ENCODE measurements at regions of chr1 and their contacts with region 1.

Region 1: GRCh38 chr1:97920832-97921571 is at the start of gene DPYD:
- DNase-seq: peak; percentile 81
- H3K4me3 ChIP-seq: peak within 1 kb of the TSS; percentile 73 to 100 (median 99)
- H3K27ac ChIP-seq: peak within 1 kb of the TSS; percentile 72
- H3K4me1 ChIP-seq: peaks cover 17% of the 10 kb centered on the region
- H3K27me3 ChIP-seq: no peaks in the 10 kb centered on the region
- CTCF ChIP-seq: no peak
- total RNA-seq, gene DPYD: 16.8 to 24.3 TPM

Region 2: GRCh38 chr1:97668945-97669344 is 252.1 kb before region 1 on chr1:
- CTCF ChIA-PET with region 1: no interaction called
- dilution Hi-C with region 1: no loop called
- in situ Hi-C with region 1: no loop called
- intact Hi-C with region 1: loop called (anchors 1 kb)
- DNase-seq: peak; percentile 28
- H3K4me3 ChIP-seq: no peak overlapping the region
- H3K27ac ChIP-seq: no peak overlapping the region
- H3K4me1 ChIP-seq: no peaks in the 10 kb centered on the region
- H3K27me3 ChIP-seq: no peaks in the 10 kb centered on the region
- CTCF ChIP-seq: peak in 1 of 2 donors; percentile 45

Region 3: DNA sequence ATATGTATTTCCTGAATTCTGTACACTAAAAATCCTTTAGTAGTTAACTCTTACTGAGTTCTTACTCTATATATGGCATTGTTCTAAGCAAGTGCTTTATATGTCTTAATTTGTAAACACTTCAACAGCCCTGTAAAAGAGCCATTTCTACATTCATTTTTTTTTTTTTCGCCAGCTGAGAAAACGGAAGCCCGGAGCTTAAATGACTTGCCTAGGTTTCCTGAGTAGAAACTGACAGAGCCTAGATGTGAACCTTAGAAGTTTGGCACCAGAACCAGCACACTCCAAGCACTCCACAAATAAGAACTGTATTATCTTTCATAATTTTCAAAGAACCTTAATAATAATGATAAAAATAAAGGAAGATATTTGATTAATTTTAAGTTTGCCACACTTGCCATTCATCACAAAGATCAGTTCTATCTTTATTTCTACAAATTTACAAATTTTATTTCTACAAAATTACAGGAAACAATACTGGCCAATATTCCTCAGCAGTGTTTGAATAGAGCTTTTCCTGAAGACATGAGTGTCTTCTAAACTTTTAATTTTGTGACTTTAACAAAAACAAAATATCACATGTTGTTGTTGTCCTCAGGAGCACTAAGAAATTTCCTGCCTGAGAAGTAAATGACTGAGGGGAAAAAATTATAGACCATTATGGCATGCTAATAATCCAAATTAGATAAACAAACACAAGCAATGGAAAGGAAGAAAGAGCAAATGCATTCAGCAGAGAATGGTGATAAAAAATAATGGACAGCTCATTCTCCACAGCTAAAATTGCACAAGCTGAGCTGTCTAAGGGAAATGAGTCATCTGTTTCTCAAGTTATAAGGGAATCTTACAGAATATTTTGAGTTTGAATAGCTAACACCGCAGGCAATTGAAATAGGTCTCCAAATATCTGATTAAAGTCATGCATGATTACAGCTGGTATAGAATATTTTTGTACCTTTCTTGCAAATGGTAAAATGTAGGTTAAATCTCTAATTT is 71.4 kb before region 1 on chr1:
- CTCF ChIA-PET with region 1: interaction called, 12 read pairs
- dilution Hi-C with region 1: no loop called
- in situ Hi-C with region 1: no loop called
- intact Hi-C with region 1: loop called (anchors 5 kb)
- DNase-seq: peak; percentile 75
- H3K4me3 ChIP-seq: no peak overlapping the region
- H3K27ac ChIP-seq: no peak overlapping the region
- H3K4me1 ChIP-seq: peaks cover 13% of the 10 kb centered on the region
- H3K27me3 ChIP-seq: no peaks in the 10 kb centered on the region
- CTCF ChIP-seq: no peak

Region 4: DNA sequence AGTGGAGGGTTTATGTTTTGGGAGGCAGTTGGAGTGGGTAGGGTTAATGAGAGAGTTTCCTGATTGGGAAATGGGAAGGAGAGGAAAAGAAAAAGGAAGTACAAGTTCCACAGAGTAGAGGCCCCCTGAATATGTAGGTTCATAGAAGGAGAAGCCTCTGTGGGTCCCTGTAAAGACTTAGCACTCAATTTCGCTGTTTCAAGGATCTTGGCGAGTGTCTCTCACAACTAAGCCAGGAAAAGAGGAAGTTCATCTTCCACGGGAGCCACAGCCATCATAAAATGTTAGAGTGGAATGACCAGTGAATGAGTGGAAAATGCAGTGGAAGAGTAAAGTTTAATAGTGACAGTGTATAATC is 17.3 kb after region 1 on chr1:
- CTCF ChIA-PET with region 1: no interaction called
- dilution Hi-C with region 1: no loop called
- in situ Hi-C with region 1: no loop called
- intact Hi-C with region 1: loop called (anchors 1 kb)
- DNase-seq: no peak
- H3K4me3 ChIP-seq: no peak overlapping the region
- H3K27ac ChIP-seq: peak overlapping the region; percentile 43
- H3K4me1 ChIP-seq: peaks cover 41% of the 10 kb centered on the region
- H3K27me3 ChIP-seq: no peaks in the 10 kb centered on the region
- CTCF ChIP-seq: no peak

Region 5: DNA sequence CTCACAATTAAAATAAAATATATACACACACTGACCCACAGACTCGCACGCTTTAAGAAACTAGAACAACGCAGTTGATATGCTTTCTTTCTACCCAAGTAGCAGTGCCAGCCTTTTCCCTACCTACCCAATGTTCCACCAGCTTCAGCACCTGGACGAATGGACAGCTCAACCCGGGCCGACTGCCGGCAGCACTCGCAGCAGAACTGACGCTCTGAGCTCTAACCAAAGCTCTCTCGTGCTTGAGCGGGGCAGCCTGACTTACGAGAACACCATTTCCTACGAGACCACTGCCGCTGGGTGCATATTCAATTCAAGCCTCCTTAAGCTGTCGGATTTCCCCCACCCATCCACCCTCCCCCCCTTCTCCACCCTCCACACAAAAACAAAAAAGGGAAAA is 127.2 kb after region 1 on chr1:
- CTCF ChIA-PET with region 1: no interaction called
- dilution Hi-C with region 1: no loop called
- in situ Hi-C with region 1: no loop called
- intact Hi-C with region 1: loop called (anchors 1 kb)
- DNase-seq: peak; percentile 82
- H3K4me3 ChIP-seq: peak overlapping the region; percentile 22 to 32 (median 27)
- H3K27ac ChIP-seq: no peak overlapping the region
- H3K4me1 ChIP-seq: peaks cover 13% of the 10 kb centered on the region
- H3K27me3 ChIP-seq: no peaks in the 10 kb centered on the region
- CTCF ChIP-seq: no peak

Measured in mammary epithelial cell (primary cell).